PC-9 (cell line): ENCODE measurements at regions of chr6 and their contacts with region 1.

Region 1: DNA sequence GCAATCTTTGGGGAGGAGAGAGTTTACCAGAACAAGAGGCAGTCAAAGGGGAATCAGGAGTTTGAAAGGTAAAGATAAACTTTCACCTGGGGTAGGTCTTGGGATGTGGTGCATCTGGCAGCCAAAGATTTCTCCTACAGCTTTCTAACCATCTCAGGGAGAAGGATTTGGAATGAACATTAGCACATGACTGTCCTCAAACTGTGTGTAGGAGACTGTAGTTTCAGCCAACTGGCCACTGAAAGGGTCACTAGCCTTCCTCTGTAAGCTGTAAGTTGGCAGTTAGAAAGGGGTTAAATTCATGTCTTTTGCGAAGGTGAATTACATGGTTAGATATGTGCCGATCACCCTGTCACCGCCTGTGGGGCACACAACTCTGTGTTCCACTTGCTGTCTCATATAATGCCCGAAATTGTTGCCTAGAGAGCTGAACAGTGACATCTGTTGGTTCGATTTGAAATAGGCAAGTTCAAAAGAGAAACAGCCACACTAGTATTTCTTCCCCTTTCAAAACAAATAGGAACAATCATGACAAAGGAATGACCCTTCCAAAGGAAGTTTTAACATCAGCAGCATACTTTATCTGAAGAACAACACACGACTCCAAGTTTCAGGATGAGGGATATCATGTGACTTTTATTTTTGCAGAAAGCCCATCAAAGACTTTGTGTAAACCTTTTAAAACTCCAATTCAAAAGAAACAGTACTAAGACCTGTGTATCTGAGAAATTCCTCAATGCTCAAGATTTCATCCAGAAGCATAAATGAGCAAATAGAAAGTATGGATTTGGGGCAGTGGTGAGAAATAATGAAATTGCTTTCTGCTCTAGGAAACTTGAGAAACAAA is 1.1 kb upstream of the OPN5 start:
- DNase-seq: peak; percentile 32 to 67
- H3K4me3 ChIP-seq: peak overlapping the region; percentile 17; the same call in 1 of the 2 replicates
- H3K27ac ChIP-seq: no peak overlapping the region
- H3K4me1 ChIP-seq: peaks cover 4% of the 10 kb centered on the region; the same call in 1 of the 2 replicates
- H3K27me3 ChIP-seq: no peaks in the 10 kb centered on the region
- CTCF ChIP-seq: peak; percentile 76

Region 2: GRCh38 chr6:47545223-47545622 is 235.5 kb before region 1 on chr6:
- CTCF ChIA-PET with region 1: interaction called, 17 read pairs
- POLR2A ChIA-PET with region 1: no interaction called
- intact Hi-C with region 1: no loop called
- DNase-seq: no peak
- H3K4me3 ChIP-seq: no peak overlapping the region
- H3K27ac ChIP-seq: no peak overlapping the region
- H3K4me1 ChIP-seq: no peaks in the 10 kb centered on the region
- H3K27me3 ChIP-seq: no peaks in the 10 kb centered on the region
- CTCF ChIP-seq: no peak

Region 3: GRCh38 chr6:47655719-47656595 is 124.8 kb before region 1 on chr6:
- CTCF ChIA-PET with region 1: no interaction called
- POLR2A ChIA-PET with region 1: no interaction called
- intact Hi-C with region 1: loop called (anchors 5 kb)
- DNase-seq: peak; percentile 78 to 84
- H3K4me3 ChIP-seq: no peak overlapping the region
- H3K27ac ChIP-seq: 0 out of 2 replicates have a peak overlapping the region, but pooled peaks have one; percentile 22
- H3K4me1 ChIP-seq: peaks cover 30% of the 10 kb centered on the region
- H3K27me3 ChIP-seq: no peaks in the 10 kb centered on the region
- CTCF ChIP-seq: no peak

Region 4: GRCh38 chr6:47733879-47734558 is 46.7 kb before region 1 on chr6:
- CTCF ChIA-PET with region 1: interaction called, 3 read pairs
- POLR2A ChIA-PET with region 1: no interaction called
- intact Hi-C with region 1: loop called (anchors 2 kb)
- DNase-seq: no peak
- H3K4me3 ChIP-seq: no peak overlapping the region
- H3K27ac ChIP-seq: no peak overlapping the region
- H3K4me1 ChIP-seq: peaks cover 20% of the 10 kb centered on the region
- H3K27me3 ChIP-seq: no peaks in the 10 kb centered on the region
- CTCF ChIP-seq: peak; percentile 74